ENCODE measurements at regions of chrX and their contacts with region 1.

Region 1: DNA sequence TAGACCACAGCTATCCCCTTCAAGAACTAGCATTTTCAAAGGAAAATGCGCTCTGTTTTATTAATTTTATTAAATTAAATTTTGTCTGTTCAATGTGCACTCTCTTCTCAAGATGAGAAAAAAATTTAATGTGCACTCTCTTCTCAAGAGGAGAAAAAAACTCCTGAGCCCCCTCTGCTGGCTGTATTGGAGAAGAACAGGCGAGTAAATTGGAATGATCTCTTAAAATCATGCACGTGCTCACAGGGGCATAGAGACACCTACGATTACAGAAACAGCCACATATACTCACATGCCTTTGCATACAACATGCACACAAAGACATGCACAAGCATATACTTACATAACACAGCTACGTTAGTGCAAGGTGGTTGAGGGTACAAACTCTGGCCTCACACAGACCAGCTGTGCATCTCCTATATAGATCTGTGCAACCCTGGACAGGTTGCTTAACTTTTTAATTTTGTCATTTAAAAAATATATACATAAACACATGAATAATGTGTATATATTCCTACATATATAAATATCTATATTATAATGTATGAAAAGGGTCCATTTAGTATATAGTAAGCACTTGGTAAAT is 176.2 kb upstream of the CXorf66 start:
- H3K4me3 ChIP-seq: no peak overlapping the region
- H3K27ac ChIP-seq: no peak overlapping the region
- H3K4me1 ChIP-seq: no peaks in the 10 kb centered on the region
- CTCF ChIP-seq: no peak

Region 2: DNA sequence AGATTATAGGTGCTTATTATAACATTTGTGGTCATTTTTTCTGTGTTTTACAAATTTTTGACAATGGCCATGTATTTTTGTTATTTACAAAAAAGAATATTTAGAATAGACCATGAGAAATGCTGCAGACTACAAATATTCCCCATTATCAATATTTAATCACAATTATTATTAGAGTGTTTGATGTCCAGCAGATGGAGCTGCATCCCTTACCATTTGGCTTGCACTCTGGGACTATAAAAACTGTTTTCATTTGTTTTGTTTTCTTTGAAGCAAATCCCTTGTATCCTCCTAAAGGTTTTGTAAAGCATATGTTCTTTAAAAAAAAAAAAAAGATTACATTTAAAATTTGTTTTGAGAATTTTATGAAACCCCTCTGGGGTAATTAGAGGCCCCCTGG is 90.6 kb before region 1 on chrX:
- CTCF ChIA-PET with region 1: interaction called, 64 read pairs
- POLR2A ChIA-PET with region 1: no interaction called
- H3K4me3 ChIP-seq: no peak overlapping the region
- H3K27ac ChIP-seq: no peak overlapping the region
- H3K4me1 ChIP-seq: no peaks in the 10 kb centered on the region
- CTCF ChIP-seq: no peak

Region 3: DNA sequence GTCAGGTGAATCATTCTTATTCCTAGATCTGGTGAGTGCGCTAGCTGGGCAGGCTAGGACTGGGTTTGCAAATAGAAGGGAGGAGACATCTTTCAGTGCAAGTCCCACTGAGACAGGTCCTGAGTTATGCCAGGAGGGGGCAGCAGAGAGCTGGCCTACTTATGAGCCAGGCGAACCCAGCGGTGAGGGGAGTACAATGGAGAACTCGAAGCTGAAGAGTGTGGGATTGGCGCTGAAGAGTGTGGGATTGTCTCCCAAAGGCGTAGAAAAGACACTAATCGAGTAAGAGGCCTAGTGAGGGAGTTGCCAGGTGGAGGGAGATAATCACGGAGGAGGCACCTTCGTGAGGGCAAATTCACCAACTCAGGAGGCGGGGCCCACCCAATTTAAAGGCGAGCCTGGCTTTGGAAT is 84.5 kb before region 1 on chrX:
- CTCF ChIA-PET with region 1: interaction called, 64 read pairs
- POLR2A ChIA-PET with region 1: no interaction called
- H3K4me3 ChIP-seq: no peak overlapping the region
- H3K27ac ChIP-seq: no peak overlapping the region
- H3K4me1 ChIP-seq: no peaks in the 10 kb centered on the region
- CTCF ChIP-seq: peak; percentile 86

Region 4: DNA sequence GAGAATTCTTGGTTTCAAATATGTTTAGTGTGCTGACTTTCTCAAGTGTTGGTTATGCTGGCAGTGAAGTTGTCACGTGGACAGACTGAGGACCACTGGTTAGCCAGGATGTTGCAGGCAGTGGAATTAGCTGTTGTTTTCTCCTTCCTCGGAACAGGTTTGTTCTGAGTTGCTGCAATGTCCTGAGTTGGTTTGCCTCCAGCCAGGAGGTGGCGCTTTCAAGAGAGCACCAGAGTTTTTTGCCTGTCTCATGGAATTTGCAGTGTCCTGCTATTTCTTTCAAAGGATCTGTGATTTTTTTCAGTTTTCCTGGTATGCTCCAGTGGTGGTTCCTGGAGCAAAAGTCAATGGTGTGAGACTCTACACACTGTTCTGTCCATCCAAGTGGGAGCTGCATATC is 18.1 kb before region 1 on chrX:
- CTCF ChIA-PET with region 1: interaction called, 12 read pairs
- POLR2A ChIA-PET with region 1: no interaction called
- H3K4me3 ChIP-seq: no peak overlapping the region
- H3K27ac ChIP-seq: no peak overlapping the region
- H3K4me1 ChIP-seq: no peaks in the 10 kb centered on the region
- CTCF ChIP-seq: 0 out of 2 replicates have a peak, but pooled peaks have one; percentile 11

Measured in HEK293 (cell line).